Posterior cingulate gyrus (tissue), 11 donors: ENCODE measurements at regions of chr12 and their contacts with region 1.

Region 1: DNA sequence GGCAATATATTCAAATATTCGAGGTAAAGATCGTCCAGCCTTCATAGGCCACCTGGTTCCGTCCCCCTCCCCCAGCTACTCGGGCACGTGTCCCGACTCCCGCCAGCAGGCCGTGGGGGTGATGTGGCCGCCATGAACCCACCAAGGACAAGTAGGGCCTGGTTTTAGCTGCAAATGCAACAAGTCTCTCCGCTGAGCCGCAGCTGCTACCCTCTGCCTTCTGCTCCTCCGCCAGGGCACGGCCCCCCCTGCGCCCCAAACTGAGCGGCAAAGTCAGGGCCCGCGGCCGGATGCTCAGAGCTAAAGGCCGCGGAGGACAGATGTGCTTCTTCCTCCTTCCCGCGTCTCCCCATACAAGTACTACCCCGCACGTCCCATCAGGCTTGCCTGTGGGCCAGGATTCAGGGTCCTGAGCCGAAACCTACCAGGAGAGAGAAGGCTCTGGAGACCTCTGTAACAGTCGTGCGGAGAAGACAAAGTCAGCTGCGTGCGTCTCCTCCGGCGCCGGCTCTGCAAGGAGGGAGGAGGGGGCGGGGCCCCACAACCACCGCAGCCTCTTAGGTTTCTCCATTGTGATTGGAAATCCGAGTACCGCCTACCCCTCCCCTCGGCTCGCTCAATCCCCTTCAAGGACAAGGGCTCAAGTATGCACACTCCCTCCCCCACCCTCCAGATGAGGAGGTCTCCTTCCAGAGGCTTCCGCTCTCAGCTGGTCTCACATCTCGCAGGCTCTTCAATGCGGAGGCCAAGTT is at the start of gene LDHB:
- DNase-seq: peak; percentile 83 to 99 (median 94)

Region 2: DNA sequence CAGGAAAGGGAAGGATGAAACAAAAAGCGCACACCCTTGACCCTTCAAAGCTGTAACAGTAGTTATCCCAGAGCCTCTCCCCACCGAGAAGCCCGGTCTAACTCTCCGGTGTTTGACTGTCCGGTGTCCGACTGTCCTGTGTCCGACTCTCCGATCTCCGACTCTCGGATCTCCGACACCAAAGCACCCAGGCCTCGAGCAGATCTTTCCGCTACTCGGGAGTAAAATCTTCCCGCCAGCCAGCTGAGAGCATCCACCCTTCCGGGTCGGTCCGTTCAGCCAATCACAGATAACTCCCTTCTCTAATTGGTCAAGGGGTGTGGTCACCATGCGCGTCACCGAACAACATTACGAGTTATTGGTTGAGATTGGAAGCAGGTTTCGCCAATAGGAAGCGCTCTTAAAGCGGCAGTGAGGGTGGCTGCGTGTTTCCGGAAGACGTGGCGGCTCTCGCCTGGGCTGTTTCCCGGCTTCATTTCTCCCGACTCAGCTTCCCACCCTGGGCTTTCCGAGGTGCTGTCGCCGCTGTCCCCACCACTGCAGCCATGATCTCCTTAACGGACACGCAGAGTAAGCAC is 156.0 kb before region 1 on chr12 and contains the starts of genes GOLT1B and RECQL:
- intact Hi-C with region 1: loop called (anchors 5 kb)
- DNase-seq: peak; percentile 86 to 99 (median 92)

Region 3: DNA sequence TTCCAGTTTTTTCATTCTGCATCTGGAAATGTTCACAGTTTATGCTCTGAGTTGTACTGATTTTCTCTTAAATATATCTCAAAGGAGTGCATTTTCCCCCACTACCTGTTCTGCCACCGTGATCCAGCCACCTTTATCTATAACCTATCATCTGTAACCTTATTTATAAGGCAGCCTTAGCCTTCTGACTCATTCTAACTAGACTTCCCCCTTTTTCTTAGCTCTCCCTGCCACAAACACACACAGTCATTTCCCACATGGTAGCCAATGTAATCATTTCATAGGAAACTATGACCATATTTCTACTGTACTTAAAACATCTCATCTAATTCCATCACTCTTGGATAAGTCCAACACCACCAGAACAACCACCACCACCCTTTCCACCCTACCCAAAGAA is 42.1 kb before region 1 on chr12:
- intact Hi-C with region 1: no loop called
- DNase-seq: no peak